OCI-LY7 (cell line): ENCODE measurements at regions of chr7 and their contacts with region 1.

Region 1: DNA sequence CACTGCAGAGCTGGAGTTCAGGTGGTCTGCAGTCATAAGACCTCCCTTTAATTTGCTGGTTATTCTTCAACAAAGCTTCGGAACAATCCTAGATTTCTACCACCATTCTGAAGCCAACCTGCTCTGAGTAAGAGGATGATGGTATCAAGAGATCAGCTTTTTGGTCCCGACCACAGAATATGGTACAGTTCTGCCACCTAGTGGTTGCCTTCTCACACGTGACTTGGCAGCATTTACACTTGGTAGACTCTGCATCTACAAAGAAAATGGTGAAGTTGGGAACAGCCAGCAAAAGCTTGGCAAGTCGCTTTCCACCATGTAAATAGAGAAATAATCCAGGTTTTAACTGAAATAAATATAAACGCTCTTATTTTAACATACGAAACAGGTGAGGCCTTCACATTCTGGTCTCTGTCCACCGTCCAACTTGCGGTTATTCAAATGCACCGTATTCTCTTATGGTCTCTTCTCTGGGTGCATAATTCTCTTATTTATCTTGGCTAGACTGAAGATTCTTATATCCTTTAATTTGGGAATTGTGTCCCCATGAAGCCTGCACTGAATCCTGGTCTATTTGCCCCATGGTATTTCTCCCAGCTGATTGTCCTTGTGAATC is 173.9 kb upstream of the GRM3 start:
- DNase-seq: peak; percentile 91
- H3K4me3 ChIP-seq: no peak overlapping the region
- H3K27ac ChIP-seq: no peak overlapping the region
- H3K4me1 ChIP-seq: peaks cover 7% of the 10 kb centered on the region
- CTCF ChIP-seq: peak; percentile 96

Region 2: GRCh38 chr7:85890244-85890811 is 579.5 kb before region 1 on chr7:
- CTCF ChIA-PET with region 1: interaction called, 3 read pairs
- POLR2A ChIA-PET with region 1: interaction called, 5 read pairs
- intact Hi-C with region 1: loop called (anchors 1 kb)
- DNase-seq: peak; percentile 66
- H3K4me3 ChIP-seq: no peak overlapping the region
- H3K27ac ChIP-seq: no peak overlapping the region
- H3K4me1 ChIP-seq: no peaks in the 10 kb centered on the region
- CTCF ChIP-seq: peak; percentile 89

Region 3: DNA sequence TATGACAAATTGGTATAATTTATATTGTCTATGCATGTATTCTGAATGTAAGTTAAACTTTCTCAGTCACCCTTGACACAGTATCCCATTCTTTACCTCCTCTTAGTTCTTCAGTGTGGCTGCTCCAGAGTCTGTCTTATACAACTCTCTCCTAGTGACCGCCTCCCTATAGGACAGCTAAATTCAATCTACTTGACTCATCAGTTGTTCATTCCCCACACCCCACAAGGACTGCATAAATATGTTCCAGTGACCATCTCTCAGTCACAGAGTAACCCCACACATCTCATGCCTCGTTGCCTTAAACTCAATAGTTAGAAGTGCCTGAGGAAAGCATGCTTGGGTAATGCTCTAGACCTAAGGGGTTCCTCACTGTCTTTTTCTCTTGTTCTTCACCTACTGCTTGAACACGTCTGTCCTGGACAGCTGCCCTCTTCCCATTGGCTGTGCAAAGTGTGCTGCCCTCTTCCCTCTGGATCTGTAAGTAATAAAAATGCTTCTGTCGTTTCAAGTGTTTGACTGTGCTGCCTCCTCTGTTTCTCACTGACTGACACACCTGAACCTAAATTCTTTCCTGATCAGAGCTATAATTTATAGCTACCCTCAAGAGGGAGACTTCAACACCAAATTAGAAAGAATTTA is 320.6 kb before region 1 on chr7:
- CTCF ChIA-PET with region 1: no interaction called
- POLR2A ChIA-PET with region 1: no interaction called
- intact Hi-C with region 1: loop called (anchors 5 kb)
- DNase-seq: no peak
- H3K4me3 ChIP-seq: no peak overlapping the region
- H3K27ac ChIP-seq: no peak overlapping the region
- H3K4me1 ChIP-seq: no peaks in the 10 kb centered on the region
- CTCF ChIP-seq: no peak

Region 4: DNA sequence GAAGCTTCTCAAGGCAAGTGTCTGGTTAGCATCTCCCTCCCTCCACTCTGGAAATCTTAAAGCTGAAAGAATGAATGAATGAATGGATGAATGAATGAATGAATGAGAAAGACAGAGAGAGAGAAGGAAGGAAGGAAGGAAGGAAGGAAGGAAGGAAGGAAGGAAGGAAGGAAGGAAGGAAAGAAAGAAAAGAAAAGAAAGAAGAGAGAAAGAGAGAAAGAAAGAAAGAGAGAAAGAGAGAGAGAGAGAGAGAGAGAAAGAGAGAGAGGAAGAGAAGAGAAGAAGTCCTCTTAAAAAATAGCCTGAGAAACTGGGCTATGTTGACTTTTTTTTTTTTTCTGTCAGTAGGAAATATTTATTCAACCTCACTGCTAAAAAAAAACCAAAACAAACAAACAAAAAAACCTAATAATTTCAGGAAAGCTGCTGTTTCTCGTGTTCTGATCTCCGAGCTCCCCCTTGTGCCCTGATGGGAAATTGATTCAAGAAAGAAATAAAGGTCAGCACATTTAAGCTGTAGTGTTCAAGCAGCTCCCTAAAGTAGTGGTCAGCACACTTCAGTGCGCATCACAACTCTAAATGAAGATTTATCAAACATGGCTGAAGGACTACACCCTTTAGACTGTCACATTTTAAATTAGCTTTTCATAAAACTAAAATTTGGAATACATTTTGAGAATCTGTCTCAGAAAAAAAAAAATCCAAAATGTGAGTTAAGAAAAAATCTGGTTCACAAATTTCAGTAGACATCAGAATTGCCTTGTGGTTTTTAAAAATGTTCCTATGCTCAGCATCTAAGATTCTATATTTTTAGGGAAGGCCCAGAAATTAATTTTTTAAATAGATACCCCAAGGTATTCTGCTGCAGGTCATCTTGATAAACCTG is 435.4 kb after region 1 on chr7:
- CTCF ChIA-PET with region 1: no interaction called
- POLR2A ChIA-PET with region 1: no interaction called
- intact Hi-C with region 1: loop called (anchors 5 kb)
- DNase-seq: peak; percentile 13
- H3K4me3 ChIP-seq: no peak overlapping the region
- H3K27ac ChIP-seq: no peak overlapping the region
- H3K4me1 ChIP-seq: no peaks in the 10 kb centered on the region
- CTCF ChIP-seq: peak; percentile 81